ENCODE measurements at regions of chr11 and their contacts with region 1.

Region 1: GRCh38 chr11:126062679-126063506 is at the start of gene CDON:
- DNase-seq: peak; percentile 90
- H3K4me3 Mint-ChIP-seq: peak within 1 kb of the TSS; percentile 84
- H3K27ac Mint-ChIP-seq: peak within 1 kb of the TSS; percentile 96
- H3K4me1 Mint-ChIP-seq: peaks cover 9% of the 10 kb centered on the region
- H3K27me3 Mint-ChIP-seq: peaks cover 38% of the 10 kb centered on the region
- total RNA-seq, gene CDON: 1.3 and 1.8 TPM in 2 replicates

Region 2: GRCh38 chr11:124746621-124747243 is 1316.2 kb before region 1 on chr11:
- intact Hi-C with region 1: loop called (anchors 2 kb)
- DNase-seq: peak; percentile 64
- H3K4me3 Mint-ChIP-seq: peak overlapping the region; percentile 89
- H3K27ac Mint-ChIP-seq: peak overlapping the region; percentile 86
- H3K4me1 Mint-ChIP-seq: peaks cover 28% of the 10 kb centered on the region
- H3K27me3 Mint-ChIP-seq: peaks cover 12% of the 10 kb centered on the region

Region 3: DNA sequence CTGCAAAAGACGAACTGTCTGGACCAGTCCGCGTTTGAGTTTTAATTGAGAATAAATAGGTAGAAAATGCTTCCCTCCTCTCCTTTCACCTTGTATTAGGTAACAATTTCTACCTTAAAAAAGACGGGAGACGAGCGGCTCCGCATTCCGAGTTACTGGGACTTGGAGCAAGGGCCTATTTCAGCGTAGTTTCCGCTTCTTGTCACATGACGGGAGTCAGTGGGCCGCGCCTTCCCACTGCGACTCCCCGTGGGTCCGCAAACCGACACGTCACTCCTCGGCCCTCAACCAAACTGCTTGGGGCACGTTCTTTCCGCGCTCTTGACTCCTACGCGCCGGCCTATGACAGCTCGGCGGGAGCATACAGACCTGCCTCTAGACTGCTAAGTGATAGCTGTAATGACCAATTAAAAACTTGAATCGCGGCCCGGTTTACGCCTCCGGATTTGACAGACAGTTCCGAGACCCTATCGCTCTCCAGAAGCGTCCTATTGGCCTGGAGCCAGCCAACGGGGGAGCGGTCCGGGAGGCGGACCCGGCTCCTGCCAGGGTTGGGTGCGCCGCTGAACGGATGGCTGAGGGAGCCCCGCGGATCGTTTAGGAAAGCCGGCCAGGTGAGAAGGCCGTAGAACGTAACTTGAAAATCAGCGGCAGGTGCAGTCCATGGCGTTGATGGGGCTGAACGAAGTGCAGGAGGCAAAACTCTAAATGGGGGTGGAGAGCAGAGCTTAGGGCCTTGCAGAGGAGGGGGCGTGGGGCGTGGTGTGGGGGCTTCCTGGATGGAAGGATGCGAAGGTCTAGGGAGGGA is 470.4 kb before region 1 on chr11 and contains the start of gene STT3A:
- intact Hi-C with region 1: loop called (anchors 1 kb)
- DNase-seq: peak; percentile 98
- H3K4me3 Mint-ChIP-seq: peak within 1 kb of the TSS; percentile 98
- H3K27ac Mint-ChIP-seq: peak within 1 kb of the TSS; percentile 94
- H3K4me1 Mint-ChIP-seq: peaks cover 50% of the 10 kb centered on the region
- H3K27me3 Mint-ChIP-seq: no peaks in the 10 kb centered on the region
- total RNA-seq, gene STT3A: 164 and 171 TPM in 2 replicates

Region 4: DNA sequence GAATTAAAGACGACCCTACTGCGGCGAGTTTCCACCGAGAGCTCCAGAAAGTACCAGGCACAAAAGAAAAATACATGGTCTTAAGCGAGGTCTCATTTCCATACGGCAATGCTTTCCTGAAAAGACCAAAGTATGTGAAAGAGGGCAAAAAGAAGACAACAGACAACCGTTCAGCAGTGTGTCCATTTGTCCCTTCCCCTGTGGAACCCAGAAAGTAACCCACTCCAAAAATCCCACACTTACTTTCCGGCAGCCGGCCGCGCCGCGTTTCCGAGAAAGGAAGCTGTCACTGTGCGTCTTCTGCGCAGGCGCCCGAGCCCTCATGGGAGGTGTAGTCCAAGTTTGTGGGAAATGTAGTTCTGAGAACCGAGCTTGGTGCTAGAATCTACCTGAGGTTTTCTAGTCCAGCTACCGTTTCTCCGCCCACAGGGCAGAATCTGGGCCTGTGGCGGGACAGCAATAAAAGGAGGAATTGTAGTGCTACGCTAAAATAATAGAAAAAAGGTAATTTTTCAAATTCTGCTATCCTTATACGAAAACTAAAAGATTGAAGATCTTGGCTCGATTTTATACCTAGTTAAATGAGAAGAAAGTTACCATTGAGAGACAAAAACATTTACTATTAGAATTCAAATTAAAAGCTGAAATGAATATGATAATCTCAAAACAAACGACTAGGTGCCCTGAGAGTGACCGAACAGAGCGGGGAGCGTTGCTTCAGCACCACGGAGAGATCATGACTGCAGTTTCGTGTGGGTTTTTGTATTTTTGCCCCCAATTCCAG is 159.8 kb before region 1 on chr11 and contains the start of gene PUS3:
- intact Hi-C with region 1: loop called (anchors 1 kb)
- DNase-seq: peak; percentile 85
- H3K4me3 Mint-ChIP-seq: peak within 1 kb of the TSS; percentile 98
- H3K27ac Mint-ChIP-seq: peak within 1 kb of the TSS; percentile 88
- H3K4me1 Mint-ChIP-seq: peaks cover 28% of the 10 kb centered on the region
- H3K27me3 Mint-ChIP-seq: peaks cover 34% of the 10 kb centered on the region
- total RNA-seq, gene PUS3: 16.5 and 23.6 TPM in 2 replicates

Region 5: GRCh38 chr11:125995313-125995712 is 67.6 kb before region 1 on chr11:
- intact Hi-C with region 1: loop called (anchors 5 kb)
- DNase-seq: no peak
- H3K4me3 Mint-ChIP-seq: no peak overlapping the region
- H3K27ac Mint-ChIP-seq: no peak overlapping the region
- H3K4me1 Mint-ChIP-seq: peaks cover 11% of the 10 kb centered on the region
- H3K27me3 Mint-ChIP-seq: no peaks in the 10 kb centered on the region

Region 6: DNA sequence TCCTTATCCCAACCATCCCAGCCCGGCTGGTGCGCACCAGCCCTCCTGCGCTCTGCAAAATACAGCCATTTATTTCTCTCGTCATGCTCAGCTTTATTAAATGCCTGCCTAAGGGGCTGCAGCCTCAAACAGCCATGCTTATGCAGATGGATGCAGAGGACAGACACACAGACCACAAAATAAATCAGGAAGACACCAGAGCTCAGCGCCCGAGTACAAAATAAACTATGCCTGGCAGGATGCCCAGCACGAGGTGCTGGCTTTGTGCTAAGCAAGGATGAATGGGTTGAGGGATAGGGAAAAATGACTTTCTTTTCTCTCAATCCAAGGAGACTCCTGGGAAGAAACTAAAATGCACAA is 78.0 kb after region 1 on chr11:
- intact Hi-C with region 1: no loop called
- DNase-seq: no peak
- H3K4me3 Mint-ChIP-seq: no peak overlapping the region
- H3K27ac Mint-ChIP-seq: no peak overlapping the region
- H3K4me1 Mint-ChIP-seq: no peaks in the 10 kb centered on the region
- H3K27me3 Mint-ChIP-seq: no peaks in the 10 kb centered on the region

Region 7: DNA sequence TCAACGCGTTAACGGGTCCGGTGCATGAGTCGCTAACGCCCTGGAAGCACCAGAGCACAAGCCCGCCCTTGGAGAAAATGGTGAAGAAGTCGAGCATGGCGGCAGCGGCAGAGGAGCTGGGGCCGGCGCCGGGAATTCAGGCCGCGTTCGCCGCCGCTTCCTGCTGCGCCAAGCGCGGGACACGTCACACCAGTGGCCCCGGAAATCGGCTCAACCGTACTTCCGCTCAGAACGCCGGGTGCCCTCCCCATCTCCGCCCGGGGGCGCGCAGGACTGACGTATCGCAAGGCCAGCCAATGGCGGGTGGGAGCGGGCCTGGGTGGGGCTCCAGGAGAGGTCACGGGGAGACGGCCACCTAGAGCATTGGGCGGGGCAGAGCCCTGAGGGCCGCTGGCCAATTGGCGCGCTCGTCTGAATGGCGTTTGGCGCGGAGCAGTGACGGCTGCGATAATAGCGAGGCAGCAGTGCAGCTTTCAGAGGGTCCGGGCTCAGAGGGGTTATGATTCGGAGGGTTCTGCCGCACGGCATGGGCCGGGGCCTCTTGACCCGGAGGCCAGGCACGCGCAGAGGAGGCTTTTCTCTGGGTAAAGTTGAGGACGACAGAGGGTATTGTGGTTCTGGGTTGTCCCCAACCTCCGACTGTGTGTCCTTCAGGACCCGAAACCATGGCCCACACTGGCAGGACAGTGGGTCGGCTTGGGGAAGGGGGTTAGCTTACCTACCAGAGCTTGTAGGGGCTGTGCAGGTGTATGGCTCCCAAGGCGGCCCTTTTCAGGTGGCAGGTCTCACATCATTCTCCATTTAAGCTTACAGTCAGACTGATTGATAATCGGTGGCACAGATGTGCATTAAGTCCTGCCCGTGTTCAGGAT is 206.1 kb after region 1 on chr11 and contains the starts of genes FOXRED1 and SRPRA:
- intact Hi-C with region 1: loop called (anchors 1 kb)
- DNase-seq: peak; percentile 100
- H3K4me3 Mint-ChIP-seq: peak within 1 kb of the TSS; percentile 99
- H3K27ac Mint-ChIP-seq: peak within 1 kb of the TSS; percentile 96
- H3K4me1 Mint-ChIP-seq: peaks cover 45% of the 10 kb centered on the region
- H3K27me3 Mint-ChIP-seq: no peaks in the 10 kb centered on the region
- total RNA-seq, gene FOXRED1: 52.9 and 56.5 TPM in 2 replicates
- total RNA-seq, gene SRPRA: 194 and 195 TPM in 2 replicates

Region 8: GRCh38 chr11:126378763-126379162 is 315.9 kb after region 1 on chr11:
- intact Hi-C with region 1: no loop called
- DNase-seq: no peak
- H3K4me3 Mint-ChIP-seq: no peak overlapping the region
- H3K27ac Mint-ChIP-seq: no peak overlapping the region
- H3K4me1 Mint-ChIP-seq: no peaks in the 10 kb centered on the region
- H3K27me3 Mint-ChIP-seq: peaks cover 2% of the 10 kb centered on the region

Region 9: GRCh38 chr11:126416542-126417090 is 353.7 kb after region 1 on chr11:
- intact Hi-C with region 1: loop called (anchors 2 kb)
- DNase-seq: peak; percentile 59
- H3K4me3 Mint-ChIP-seq: peak overlapping the region; percentile 62
- H3K27ac Mint-ChIP-seq: no peak overlapping the region
- H3K4me1 Mint-ChIP-seq: peaks cover 17% of the 10 kb centered on the region
- H3K27me3 Mint-ChIP-seq: peaks cover 5% of the 10 kb centered on the region

Measured in activated T-helper 1 cell treated with anti-CD3 and anti-CD28 coated beads, Interleukin-12 subunit alpha, Interleukin-12 subunit beta, Interleukin-2, Interleukin-4 antibody, amounts not matched to agents 30 ng/mL and 10 ng/mL and 1 ng/mL, durations not matched to agents 14 hours and 24 hours and 36 hours (primary cell).